ENCODE measurements at regions of chr1 and their contacts with region 1.

Region 1: DNA sequence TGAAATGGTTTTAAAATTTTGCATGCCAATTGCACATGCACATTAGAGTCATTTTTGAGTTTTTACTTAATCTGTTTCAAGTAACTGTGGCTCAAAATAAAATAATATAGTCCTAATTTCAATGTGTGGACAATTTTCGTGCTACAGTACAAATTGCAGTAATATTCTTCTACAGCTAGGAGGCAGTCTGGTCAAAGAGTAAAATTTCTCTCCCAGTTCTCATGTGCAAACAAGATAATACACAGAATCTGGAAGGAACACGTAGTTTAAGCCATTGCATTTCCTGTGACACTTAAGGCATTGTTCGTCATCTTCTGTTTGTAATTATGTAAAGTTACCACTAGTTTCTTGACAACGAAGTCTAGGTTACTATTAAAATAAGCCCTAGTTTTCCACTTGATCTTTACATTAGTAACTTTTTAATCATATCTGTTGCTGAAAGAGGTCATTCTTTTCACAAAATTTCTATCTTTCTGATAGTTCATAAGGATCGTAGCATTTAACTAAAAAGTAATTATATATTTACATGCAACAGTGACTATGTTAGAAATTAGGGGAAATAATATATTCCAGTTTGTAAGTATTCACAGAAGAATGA is 28.9 kb downstream of the ODR4 start:
- DNase-seq: no peak
- H3K4me3 Mint-ChIP-seq: no peak overlapping the region
- H3K27ac Mint-ChIP-seq: peak overlapping the region; percentile 44
- H3K4me1 Mint-ChIP-seq: peaks cover 9% of the 10 kb centered on the region
- H3K27me3 Mint-ChIP-seq: no peaks in the 10 kb centered on the region

Region 2: DNA sequence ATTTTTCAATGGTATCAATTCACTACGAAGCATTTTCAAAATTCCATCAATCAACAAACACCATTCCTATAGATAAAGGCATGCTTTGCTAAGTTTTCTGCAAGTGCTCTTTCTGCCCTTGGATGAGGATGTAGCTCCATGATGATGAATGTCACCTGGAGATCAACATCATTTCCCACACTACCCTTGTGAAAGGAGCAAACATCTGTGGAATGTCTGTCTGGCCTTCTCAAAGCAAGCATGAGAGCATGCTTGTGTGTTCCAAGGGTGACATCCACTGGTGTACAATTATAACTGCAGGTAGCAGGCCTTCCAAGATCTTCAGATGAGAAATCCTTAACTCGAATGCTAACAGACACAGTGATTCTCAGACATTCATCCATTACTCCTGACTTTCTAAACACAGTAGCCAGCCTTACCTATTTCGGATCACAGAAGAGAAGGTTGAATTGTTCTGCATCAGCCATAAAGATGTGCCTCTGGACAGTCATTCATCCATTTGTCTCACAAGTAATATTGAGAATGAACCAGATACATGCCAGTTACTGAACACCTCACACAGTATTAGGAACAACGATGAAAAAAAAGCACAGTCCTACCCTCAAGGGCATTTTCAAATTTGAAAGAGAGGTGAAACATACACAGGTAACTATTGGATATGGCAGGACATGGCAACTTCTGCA is 191.9 kb before region 1 on chr1:
- intact Hi-C with region 1: no loop called
- DNase-seq: peak; percentile 19
- H3K4me3 Mint-ChIP-seq: no peak overlapping the region
- H3K27ac Mint-ChIP-seq: no peak overlapping the region
- H3K4me1 Mint-ChIP-seq: no peaks in the 10 kb centered on the region
- H3K27me3 Mint-ChIP-seq: peaks cover 26% of the 10 kb centered on the region

Region 3: DNA sequence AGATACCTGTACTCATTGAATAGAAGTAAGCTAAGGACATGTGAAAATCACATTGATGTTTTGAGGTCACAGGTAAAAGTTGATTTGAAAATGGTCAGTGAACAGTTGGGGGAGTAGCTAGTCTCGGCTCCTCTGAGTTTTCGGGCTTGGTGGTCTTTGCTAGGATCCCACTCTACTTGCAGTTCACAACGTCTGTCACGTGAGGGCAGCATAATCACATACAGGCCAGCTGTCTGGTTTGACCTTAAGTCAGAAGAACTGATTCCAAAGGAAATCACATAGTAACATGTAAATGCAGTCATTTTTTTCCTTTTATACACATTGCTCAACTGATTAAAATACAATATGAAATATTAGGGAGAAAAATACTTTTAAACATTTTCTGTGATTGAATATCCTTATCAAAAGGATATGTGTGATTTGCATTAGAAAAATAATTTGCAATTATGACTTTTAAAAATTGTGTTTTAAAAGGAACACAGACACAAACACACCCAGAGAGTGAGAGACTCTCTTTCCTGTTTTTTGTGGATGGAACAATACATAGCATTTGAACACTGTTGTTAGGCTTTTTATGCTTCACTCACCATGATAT is 78.2 kb after region 1 on chr1:
- intact Hi-C with region 1: loop called (anchors 2 kb)
- DNase-seq: peak; percentile 11
- H3K4me3 Mint-ChIP-seq: no peak overlapping the region
- H3K27ac Mint-ChIP-seq: no peak overlapping the region
- H3K4me1 Mint-ChIP-seq: no peaks in the 10 kb centered on the region
- H3K27me3 Mint-ChIP-seq: peaks cover 4% of the 10 kb centered on the region

Region 4: GRCh38 chr1:186605762-186606350 is 201.3 kb after region 1 on chr1:
- intact Hi-C with region 1: loop called (anchors 5 kb)
- DNase-seq: peak; percentile 11
- H3K4me3 Mint-ChIP-seq: no peak overlapping the region
- H3K27ac Mint-ChIP-seq: no peak overlapping the region
- H3K4me1 Mint-ChIP-seq: no peaks in the 10 kb centered on the region
- H3K27me3 Mint-ChIP-seq: peaks cover 51% of the 10 kb centered on the region

Region 5: DNA sequence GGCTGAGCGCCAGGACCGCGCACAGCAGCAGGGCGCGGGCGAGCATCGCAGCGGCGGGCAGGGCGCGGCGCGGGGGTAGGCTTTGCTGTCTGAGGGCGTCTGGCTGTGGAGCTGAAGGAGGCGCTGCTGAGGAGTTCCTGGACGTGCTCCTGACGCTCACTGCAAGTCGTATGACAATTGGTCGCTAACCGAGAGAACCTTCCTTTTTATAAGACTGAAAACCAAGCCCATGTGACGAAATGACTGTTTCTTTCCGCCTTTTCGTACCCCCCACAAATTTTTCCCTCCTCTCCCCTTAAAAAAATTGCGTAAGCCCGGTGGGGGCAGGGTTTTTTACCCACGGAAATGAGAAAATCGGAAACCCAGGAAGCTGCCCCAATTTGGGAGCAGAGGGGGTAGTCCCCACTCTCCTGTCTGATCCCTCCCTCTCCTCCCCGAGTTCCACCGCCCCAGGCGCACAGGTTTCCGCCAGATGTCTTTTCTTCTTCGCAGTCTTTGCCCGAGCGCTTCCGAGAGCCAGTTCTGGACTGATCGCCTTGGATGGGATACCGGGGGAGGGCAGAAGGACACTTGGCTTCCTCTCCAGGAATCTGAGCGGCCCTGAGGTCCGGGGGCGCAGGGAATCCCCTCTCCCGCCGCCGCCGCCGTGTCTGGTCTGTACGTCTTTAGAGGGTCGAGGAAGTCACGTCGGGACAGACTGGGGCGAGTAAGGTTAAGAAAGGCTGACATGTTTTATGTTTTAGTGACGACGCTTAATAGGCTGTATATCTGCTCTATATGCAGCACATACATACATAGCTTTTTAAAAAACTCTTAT is 275.9 kb after region 1 on chr1 and contains the start of gene PTGS2:
- intact Hi-C with region 1: loop called (anchors 10 kb)
- DNase-seq: peak; percentile 21
- H3K4me3 Mint-ChIP-seq: peak within 1 kb of the TSS; percentile 72
- H3K27ac Mint-ChIP-seq: no peak within 1 kb of the TSS
- H3K4me1 Mint-ChIP-seq: peaks cover 13% of the 10 kb centered on the region
- H3K27me3 Mint-ChIP-seq: peaks cover 56% of the 10 kb centered on the region
- total RNA-seq, gene PTGS2: 0.67 and 0.71 TPM in 2 replicates

Region 6: DNA sequence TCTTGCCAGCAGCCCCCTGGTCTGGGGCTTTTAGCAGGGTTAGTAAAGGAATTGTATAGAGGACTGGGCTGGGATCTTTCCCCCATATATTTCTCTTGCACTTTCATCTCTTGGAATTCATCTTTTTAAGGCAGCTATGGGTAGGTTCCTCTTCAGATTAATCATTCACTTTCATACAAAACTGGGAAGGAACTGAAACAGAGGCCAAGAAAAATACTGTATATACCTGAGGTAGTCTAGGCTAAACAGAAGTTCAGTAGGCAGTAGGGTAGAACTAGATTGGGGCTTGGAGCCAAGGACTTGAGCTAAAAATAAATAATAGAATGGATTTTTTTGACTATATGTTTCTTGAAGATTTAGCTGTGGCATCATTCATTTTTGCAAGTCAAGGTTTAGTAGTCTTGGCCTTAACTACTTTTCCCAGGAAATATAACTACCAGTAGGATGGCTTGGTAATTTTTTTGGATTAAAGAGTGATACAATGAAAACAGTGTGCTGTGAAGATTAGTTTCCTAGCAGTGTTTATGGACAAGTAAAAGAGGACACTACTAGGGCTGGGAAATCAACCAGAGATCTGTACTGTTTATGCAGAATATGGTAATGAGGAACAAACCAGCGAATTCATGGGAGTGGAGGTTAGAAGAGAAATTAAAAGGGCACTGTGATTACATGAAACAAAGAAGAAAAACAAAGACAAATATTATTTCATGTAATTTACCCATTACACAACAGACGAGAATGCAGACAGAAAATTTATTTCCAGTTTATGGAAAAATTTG is 326.6 kb after region 1 on chr1:
- intact Hi-C with region 1: loop called (anchors 5 kb)
- DNase-seq: no peak
- H3K4me3 Mint-ChIP-seq: no peak overlapping the region
- H3K27ac Mint-ChIP-seq: no peak overlapping the region
- H3K4me1 Mint-ChIP-seq: no peaks in the 10 kb centered on the region
- H3K27me3 Mint-ChIP-seq: peaks cover 2% of the 10 kb centered on the region

Region 7: DNA sequence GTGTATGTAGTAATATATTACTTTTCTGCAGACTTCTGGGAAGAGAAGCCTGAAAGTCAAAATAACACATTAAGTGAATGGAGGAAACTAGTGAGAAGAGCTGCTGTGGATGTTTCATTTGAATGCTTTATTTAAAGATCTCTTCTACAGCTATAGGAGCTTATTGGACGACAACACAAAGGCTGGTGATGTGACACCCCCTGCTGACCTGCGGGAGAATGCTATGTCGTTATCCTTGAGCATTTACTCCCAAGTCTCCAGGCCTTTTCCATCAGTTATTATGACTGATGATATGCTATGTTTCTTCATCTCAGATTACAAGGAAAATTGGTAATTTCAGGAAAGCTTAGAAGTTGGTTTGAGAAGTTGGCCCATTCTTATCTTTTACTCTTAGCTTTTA is 401.9 kb after region 1 on chr1:
- intact Hi-C with region 1: loop called (anchors 10 kb)
- DNase-seq: no peak
- H3K4me3 Mint-ChIP-seq: no peak overlapping the region
- H3K27ac Mint-ChIP-seq: no peak overlapping the region
- H3K4me1 Mint-ChIP-seq: no peaks in the 10 kb centered on the region
- H3K27me3 Mint-ChIP-seq: no peaks in the 10 kb centered on the region

Region 8: GRCh38 chr1:186985889-186986491 is 581.4 kb after region 1 on chr1:
- intact Hi-C with region 1: loop called (anchors 1 kb)
- DNase-seq: peak; percentile 3
- H3K4me3 Mint-ChIP-seq: no peak overlapping the region
- H3K27ac Mint-ChIP-seq: no peak overlapping the region
- H3K4me1 Mint-ChIP-seq: no peaks in the 10 kb centered on the region
- H3K27me3 Mint-ChIP-seq: peaks cover 7% of the 10 kb centered on the region